ENCODE measurements at regions of chr3 and their contacts with region 1.

Region 1: DNA sequence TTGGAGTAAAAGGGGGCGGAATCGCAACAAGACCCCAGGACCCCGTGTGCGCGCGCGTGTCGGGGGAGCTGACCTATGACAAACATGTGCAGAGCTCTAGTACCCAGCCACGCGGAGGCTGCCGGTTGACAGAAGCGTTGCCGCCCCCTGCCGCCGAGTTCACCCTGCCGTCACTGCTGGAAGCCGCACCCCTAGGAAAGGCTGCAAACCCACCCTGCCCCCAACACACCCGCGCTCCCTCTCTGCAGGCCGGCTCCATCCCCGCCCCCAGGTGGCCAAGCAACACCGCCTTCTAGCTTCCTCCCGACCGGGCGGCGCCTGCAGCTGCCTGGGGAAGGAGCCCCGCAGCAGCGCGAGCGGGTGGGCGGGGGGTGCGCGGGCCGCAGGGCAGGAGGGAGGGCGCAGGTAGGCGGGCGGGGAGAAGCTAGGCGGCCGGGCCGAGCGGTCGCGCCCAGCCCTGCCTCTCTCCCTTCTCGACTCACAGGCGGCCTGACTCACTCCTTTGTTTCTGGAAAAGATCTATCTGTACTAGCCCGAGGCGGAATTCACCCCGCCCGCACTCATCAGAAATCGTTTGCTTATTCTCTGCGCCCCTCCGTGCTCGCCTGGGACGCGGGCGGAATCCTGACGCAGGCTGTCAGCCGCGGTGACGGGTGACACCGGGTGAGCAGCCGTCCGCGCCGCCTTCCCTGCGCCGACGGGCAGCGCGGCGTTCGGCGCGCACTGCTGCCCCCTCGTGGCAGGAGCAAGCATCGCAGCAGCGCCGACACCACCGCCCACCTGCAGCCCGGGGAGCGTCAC is 160.8 kb downstream of the GAP43 start:
- DNase-seq: peak; percentile 88
- H3K4me3 ChIP-seq: peak overlapping the region; percentile 65
- H3K27ac ChIP-seq: peak overlapping the region; percentile 97
- H3K27me3 ChIP-seq: no peaks in the 10 kb centered on the region
- CTCF ChIP-seq: peak; percentile 91

Region 2: GRCh38 chr3:115710799-115711198 is 73.3 kb before region 1 on chr3:
- CTCF ChIA-PET with region 1: interaction called, 10 read pairs
- POLR2A ChIA-PET with region 1: interaction called, 8 read pairs
- DNase-seq: no peak
- H3K4me3 ChIP-seq: no peak overlapping the region
- H3K27ac ChIP-seq: no peak overlapping the region
- H3K27me3 ChIP-seq: no peaks in the 10 kb centered on the region
- CTCF ChIP-seq: no peak

Region 3: DNA sequence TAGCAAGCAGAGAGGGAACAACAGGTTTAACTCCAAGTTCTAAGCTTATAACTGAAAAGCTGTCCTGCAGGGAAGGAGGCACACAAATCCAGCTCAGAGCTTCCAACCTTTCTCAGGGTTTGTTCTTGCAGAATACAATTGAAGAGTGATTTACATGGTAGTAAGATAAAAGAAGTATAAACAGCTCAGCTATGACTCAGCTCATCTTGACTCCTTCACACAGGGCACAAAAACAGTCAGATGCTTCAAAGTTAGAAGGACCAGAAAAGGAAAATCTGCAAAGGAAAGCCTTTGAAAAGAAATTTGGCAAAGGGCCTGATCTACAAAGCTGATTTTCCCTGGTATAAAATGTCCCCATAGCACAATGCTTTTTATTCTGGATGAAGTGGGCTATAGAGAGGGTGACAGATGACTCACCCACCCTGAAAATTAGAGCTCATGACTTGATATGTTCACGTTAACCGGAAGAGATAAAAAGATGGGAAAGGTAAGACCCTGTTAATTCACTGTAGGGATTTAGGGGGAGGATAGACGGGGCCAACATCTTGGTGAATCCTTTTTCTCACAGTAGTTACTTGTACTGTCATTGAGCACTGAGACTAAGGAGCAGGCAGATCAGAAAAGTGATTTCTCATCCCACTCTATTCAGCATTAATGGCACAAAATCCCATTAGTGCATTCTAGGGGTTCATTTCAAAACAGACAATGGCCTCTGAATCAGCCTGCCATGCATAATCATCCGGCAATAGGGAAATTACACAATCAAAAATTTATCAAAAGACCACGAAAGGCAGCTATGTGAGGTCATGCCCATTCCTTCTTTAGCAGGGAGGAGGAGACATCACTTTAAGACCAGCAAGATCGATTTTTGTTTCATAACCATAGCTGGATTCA is 17.3 kb before region 1 on chr3:
- CTCF ChIA-PET with region 1: interaction called, 13 read pairs
- POLR2A ChIA-PET with region 1: interaction called, 7 read pairs
- DNase-seq: no peak
- H3K4me3 ChIP-seq: no peak overlapping the region
- H3K27ac ChIP-seq: no peak overlapping the region
- H3K27me3 ChIP-seq: no peaks in the 10 kb centered on the region
- CTCF ChIP-seq: no peak

Region 4: DNA sequence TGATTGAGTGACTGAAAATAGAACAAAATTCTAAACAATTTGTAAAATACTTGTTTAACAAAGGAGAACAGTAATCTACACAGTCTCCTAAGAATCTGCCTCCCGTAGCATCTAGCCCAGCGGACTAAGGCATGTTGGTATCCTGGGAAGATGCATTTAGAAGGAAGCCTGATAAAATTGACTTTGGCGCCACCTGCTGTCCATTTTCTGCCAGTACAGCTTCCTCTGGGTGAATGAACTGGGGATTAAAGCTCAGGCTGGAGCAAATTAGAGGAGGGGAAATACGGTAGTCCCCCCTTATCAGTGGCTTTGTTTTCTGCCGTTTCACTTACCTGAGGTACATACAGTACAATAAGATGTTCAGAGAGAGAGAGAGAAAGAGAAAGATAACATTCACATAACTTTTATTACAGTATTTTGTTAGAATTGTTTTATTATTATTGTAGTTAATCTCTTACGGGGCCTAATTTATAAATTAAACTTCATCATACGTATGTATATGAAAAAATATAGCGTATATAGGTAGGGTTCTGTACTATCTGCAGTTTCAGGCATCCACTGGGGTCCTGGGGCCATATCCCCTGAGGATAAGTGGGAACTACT is 30.7 kb after region 1 on chr3:
- CTCF ChIA-PET with region 1: interaction called, 24 read pairs
- POLR2A ChIA-PET with region 1: no interaction called
- DNase-seq: no peak
- H3K4me3 ChIP-seq: no peak overlapping the region
- H3K27ac ChIP-seq: no peak overlapping the region
- H3K27me3 ChIP-seq: no peaks in the 10 kb centered on the region
- CTCF ChIP-seq: peak; percentile 91

Region 5: GRCh38 chr3:116517308-116517707 is 733.2 kb after region 1 on chr3:
- CTCF ChIA-PET with region 1: no interaction called
- POLR2A ChIA-PET with region 1: no interaction called
- DNase-seq: no peak
- H3K4me3 ChIP-seq: no peak overlapping the region
- H3K27ac ChIP-seq: no peak overlapping the region
- H3K27me3 ChIP-seq: no peaks in the 10 kb centered on the region
- CTCF ChIP-seq: peak; percentile 12; the same call in 1 of the 2 replicates